Endothelial cell of umbilical vein (primary cell): ENCODE measurements at regions of chr1 and their contacts with region 1.

Region 1: DNA sequence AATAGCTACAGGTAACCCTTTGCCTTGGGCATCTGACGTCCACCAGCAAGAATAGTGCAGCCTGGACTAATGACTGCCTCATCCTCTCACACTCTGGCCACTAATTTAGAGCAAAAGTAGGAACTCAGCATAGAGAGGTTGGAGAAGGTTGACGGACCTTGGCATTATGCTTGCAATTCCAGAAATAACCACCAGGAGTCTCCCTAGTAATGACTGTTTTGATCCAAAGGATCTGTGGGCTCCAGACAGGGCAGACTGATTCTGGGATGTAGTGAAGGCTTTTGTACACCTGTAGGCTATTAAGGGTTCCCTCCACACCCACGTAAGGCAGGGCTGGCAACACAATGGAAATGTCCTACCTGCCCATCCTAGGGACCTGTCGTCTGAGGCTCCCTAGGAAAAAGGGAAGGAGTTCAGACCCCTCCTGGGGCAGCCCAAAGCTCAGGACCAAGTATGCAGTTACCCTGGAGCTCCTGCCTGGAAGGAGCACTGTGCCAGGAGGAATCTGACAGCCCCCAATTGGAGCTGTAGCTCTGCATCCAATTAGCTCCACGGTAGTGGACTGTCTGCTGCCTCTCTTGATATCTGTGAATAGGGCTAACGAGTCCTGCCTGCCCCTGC is 91.0 kb upstream of the TMEM51 start:
- DNase-seq: no peak
- H3K4me3 ChIP-seq: no peak overlapping the region
- H3K27ac ChIP-seq: no peak overlapping the region
- H3K4me1 ChIP-seq: no peaks in the 10 kb centered on the region
- H3K27me3 ChIP-seq: no peaks in the 10 kb centered on the region
- CTCF ChIP-seq: peak; percentile 41 to 58
- POLR2A ChIP-seq: no peak

Region 2: DNA sequence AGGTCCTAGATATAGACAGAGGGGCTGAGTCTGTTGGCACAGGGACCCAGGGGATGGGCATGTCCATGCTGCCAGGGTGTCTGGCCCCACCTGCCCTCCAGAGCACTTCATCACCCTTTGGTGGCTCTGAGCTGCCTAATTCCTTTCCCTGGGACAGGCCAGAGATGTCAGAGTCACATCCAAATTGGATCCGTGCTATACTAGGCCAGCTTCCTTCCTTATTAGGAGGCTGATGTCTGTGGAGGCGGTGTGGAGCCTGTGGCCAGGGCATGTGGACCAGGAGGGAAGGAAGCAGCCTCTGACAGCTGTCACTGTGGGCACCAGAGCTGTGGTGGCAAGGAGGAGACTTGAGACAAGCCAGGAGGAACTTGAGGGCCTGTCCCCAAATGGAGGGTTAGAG is 13.2 kb after region 1 on chr1:
- CTCF ChIA-PET with region 1: no interaction called
- POLR2A ChIA-PET with region 1: no interaction called
- dilution Hi-C with region 1: no loop called
- intact Hi-C with region 1: no loop called
- DNase-seq: no peak
- H3K4me3 ChIP-seq: no peak overlapping the region
- H3K27ac ChIP-seq: no peak overlapping the region
- H3K4me1 ChIP-seq: no peaks in the 10 kb centered on the region
- H3K27me3 ChIP-seq: no peaks in the 10 kb centered on the region
- CTCF ChIP-seq: no peak
- POLR2A ChIP-seq: no peak

Region 3: GRCh38 chr1:15100121-15100874 is 37.7 kb after region 1 on chr1:
- CTCF ChIA-PET with region 1: interaction called, 7 read pairs
- POLR2A ChIA-PET with region 1: no interaction called
- dilution Hi-C with region 1: no loop called
- intact Hi-C with region 1: loop called (anchors 1 kb)
- DNase-seq: peak; percentile 56
- H3K4me3 ChIP-seq: no peak overlapping the region
- H3K27ac ChIP-seq: no peak overlapping the region
- H3K4me1 ChIP-seq: no peaks in the 10 kb centered on the region
- H3K27me3 ChIP-seq: no peaks in the 10 kb centered on the region
- CTCF ChIP-seq: peak; percentile 86 to 88
- POLR2A ChIP-seq: no peak

Region 4: GRCh38 chr1:15304701-15305467 is 242.3 kb after region 1 on chr1:
- CTCF ChIA-PET with region 1: no interaction called
- POLR2A ChIA-PET with region 1: no interaction called
- dilution Hi-C with region 1: no loop called
- intact Hi-C with region 1: loop called (anchors 1 kb)
- DNase-seq: peak; percentile 49
- H3K4me3 ChIP-seq: no peak overlapping the region
- H3K27ac ChIP-seq: no peak overlapping the region
- H3K4me1 ChIP-seq: no peaks in the 10 kb centered on the region
- H3K27me3 ChIP-seq: no peaks in the 10 kb centered on the region
- CTCF ChIP-seq: peak; percentile 85 to 87
- POLR2A ChIP-seq: no peak